ENCODE measurements at regions of chr1 and their contacts with region 1.

Region 1: DNA sequence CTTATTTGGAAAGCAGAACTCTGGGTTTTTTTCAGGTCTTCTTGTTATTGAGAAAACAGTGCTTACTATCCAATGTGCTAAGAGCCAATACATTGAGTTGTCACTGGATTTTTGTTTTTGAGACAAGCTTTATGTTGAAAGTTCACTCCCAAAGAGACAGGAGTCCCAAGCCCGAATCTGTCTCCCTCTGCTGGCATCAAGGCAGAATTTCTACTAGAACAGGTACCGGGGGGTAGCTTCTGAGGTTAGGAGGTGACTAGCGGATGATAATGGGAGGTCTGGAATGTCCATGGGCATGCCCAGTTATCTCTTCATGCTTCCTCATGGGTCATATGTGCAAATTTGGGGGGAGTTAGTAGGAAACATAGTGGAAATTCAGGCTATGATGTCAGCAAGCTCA is 25.1 kb downstream of the ZNF124 start:
- DNase-seq: no peak
- H3K4me3 Mint-ChIP-seq: no peak overlapping the region
- H3K27ac Mint-ChIP-seq: no peak overlapping the region
- H3K4me1 Mint-ChIP-seq: no peaks in the 10 kb centered on the region
- H3K27me3 Mint-ChIP-seq: no peaks in the 10 kb centered on the region

Region 2: DNA sequence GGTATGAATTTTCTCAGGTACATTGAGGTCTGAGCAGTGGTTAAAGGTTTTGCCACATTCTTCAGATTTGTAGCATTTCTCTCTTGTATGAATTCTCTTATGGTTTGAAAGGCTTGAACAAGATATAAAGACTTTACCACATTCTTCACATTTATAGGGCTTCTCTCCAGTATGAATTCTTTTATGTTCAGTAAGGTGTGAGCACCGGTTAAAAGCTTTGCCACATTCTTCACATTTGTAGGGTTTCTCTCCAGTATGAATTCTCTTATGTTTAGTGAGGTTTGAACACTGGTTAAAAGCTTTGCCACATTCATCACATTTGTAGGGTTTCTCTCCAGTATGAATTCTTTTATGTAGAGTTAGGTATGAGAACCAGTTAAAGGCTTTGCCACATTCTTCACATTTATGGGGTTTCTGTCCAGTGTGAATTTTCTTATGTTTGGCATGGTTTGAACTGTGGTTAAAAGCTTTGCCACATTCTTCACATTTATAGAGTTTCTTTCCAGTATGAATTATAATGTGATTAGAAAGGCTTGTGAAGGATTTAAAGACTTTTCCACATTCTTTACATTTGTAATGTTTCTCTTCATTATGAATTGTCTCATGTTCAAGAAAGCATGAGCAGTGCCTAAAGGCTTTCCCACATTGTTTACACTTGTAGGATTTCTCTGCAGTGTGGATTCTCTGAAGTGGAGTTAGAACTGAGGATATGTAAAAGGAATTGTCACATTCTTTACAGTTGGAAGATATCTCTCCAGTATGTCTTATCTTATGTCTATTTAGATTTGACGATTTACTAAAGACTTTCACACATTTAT is 43.5 kb after region 1 on chr1:
- intact Hi-C with region 1: loop called (anchors 5 kb)
- DNase-seq: no peak
- H3K4me3 Mint-ChIP-seq: no peak overlapping the region
- H3K27ac Mint-ChIP-seq: no peak overlapping the region
- H3K4me1 Mint-ChIP-seq: no peaks in the 10 kb centered on the region
- H3K27me3 Mint-ChIP-seq: no peaks in the 10 kb centered on the region

Measured in activated T-helper 1 cell treated with anti-CD3 and anti-CD28 coated beads, Interleukin-12 subunit alpha, Interleukin-12 subunit beta, Interleukin-2, Interleukin-4 antibody, amounts not matched to agents 30 ng/mL and 10 ng/mL and 1 ng/mL, durations not matched to agents 14 hours and 24 hours and 36 hours (primary cell).